CD8-positive, alpha-beta T cell (primary cell): ENCODE measurements at regions of chr2 and their contacts with region 1.

Region 1: GRCh38 chr2:177392373-177393202 is at the start of gene AGPS:
- DNase-seq: peak; percentile 50 to 86 (median 70)
- ATAC-seq: peak; percentile 87
- H3K4me3 ChIP-seq: peak within 1 kb of the TSS; percentile 79 to 86
- H3K4me3 Mint-ChIP-seq: peak within 1 kb of the TSS; percentile 86
- H3K27ac ChIP-seq: peak within 1 kb of the TSS; percentile 55 to 62
- H3K27ac Mint-ChIP-seq: peak within 1 kb of the TSS; percentile 93
- H3K4me1 ChIP-seq: peaks cover 35% of the 10 kb centered on the region
- H3K4me1 Mint-ChIP-seq: peaks cover 59% of the 10 kb centered on the region
- H3K27me3 ChIP-seq: no peaks in the 10 kb centered on the region
- H3K27me3 Mint-ChIP-seq: no peaks in the 10 kb centered on the region
- CTCF ChIP-seq: no peak
- total RNA-seq, gene AGPS: 19.2 to 23.8 TPM

Region 2: GRCh38 chr2:177455187-177455586 is 62.6 kb after region 1 on chr2:
- CTCF ChIA-PET with region 1: no interaction called
- POLR2A ChIA-PET with region 1: no interaction called
- intact Hi-C with region 1: no loop called
- DNase-seq: no peak
- ATAC-seq: no peak
- H3K4me3 ChIP-seq: no peak overlapping the region
- H3K4me3 Mint-ChIP-seq: no peak overlapping the region
- H3K27ac ChIP-seq: no peak overlapping the region
- H3K27ac Mint-ChIP-seq: no peak overlapping the region
- H3K4me1 ChIP-seq: no peaks in the 10 kb centered on the region
- H3K4me1 Mint-ChIP-seq: no peaks in the 10 kb centered on the region
- H3K27me3 ChIP-seq: no peaks in the 10 kb centered on the region
- H3K27me3 Mint-ChIP-seq: no peaks in the 10 kb centered on the region
- CTCF ChIP-seq: no peak

Region 3: DNA sequence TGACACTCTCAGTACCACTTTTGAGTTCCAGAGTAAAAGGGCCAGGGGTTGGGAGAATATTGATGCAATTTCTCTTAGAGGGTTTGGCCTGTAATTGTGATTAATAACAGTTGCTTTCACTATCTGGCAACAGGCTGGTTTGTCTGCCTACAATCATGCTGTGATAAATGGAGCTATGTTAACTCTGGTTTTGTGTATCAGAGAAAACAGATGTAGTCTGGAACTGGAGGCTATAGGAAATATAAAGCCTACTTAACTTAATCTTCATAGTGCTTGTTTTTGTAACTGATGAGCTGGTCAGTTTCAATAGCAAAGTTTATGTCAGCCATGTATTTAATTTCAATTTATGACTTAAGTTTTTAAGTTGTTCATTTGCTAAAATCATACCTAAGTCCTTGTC is 138.0 kb after region 1 on chr2:
- CTCF ChIA-PET with region 1: no interaction called
- POLR2A ChIA-PET with region 1: no interaction called
- intact Hi-C with region 1: no loop called
- DNase-seq: no peak
- ATAC-seq: no peak
- H3K4me3 ChIP-seq: no peak overlapping the region
- H3K4me3 Mint-ChIP-seq: no peak overlapping the region
- H3K27ac ChIP-seq: no peak overlapping the region
- H3K27ac Mint-ChIP-seq: no peak overlapping the region
- H3K4me1 ChIP-seq: no peaks in the 10 kb centered on the region
- H3K4me1 Mint-ChIP-seq: no peaks in the 10 kb centered on the region
- H3K27me3 ChIP-seq: no peaks in the 10 kb centered on the region
- H3K27me3 Mint-ChIP-seq: no peaks in the 10 kb centered on the region
- CTCF ChIP-seq: no peak

Region 4: DNA sequence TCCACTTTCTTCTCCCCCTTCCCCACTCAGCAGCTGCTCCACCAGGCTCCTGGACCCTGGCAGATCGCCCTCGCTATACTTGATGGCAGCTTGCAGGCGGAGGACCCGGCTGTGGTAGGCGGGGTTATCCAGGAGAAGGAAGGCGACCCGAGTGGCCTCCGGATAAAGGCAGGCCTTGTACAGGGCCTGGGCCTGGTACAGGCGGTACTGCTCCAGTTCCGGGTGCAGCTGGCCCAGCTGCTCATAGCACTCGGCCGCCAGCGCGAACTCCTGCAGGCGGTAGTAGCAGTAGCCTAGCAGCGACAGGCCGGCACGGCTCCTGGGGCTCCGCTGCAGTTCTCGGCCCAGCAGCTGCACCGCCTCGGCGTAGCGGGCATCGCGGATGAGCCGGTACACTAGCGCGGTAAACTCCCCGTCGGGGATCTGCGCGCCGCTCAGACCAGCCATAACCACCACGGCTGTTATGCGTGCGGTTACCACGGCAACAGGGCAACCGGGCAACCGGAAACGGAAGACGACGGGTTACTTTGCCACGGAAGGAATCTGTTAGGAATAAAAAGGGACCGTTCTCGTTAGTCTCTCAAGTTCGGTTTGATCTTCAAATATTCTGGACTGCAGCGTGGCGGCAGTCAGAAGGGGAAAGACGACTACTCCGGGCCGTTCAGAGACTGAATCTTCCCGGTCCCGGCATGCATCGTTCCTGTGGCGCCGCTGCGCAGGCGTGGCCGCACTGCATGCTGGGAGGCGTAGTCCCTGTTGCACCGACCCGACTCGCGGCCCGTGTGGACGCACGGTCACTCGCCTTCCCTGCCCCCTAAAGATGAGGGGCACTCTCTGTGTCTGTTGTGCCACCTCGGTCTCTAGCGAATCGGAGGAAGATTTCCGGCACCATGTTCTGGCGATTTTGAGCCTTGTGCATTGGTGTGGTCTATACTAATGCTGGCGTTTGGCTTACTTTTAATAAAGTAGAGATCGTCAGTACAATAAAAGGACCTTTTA is 226.0 kb after region 1 on chr2:
- CTCF ChIA-PET with region 1: no interaction called
- POLR2A ChIA-PET with region 1: no interaction called
- intact Hi-C with region 1: loop called in 1 of 2 experiments (anchors 1 kb)
- DNase-seq: peak; percentile 80 to 96 (median 91)
- ATAC-seq: peak; percentile 89
- H3K4me3 ChIP-seq: peak overlapping the region; percentile 89 to 93
- H3K4me3 Mint-ChIP-seq: peak overlapping the region; percentile 97
- H3K27ac ChIP-seq: peak overlapping the region; percentile 97 to 99
- H3K27ac Mint-ChIP-seq: peak overlapping the region; percentile 98
- H3K4me1 ChIP-seq: peaks cover 8% of the 10 kb centered on the region
- H3K4me1 Mint-ChIP-seq: peaks cover 7% of the 10 kb centered on the region
- H3K27me3 ChIP-seq: no peaks in the 10 kb centered on the region
- H3K27me3 Mint-ChIP-seq: no peaks in the 10 kb centered on the region
- CTCF ChIP-seq: no peak